ENCODE measurements at regions of chr7 and their contacts with region 1.

Region 1: GRCh38 chr7:129825496-129826267 is 127.1 kb downstream of the UBE2H start:
- DNase-seq: peak; percentile 97
- H3K4me3 ChIP-seq: peak overlapping the region; percentile 60 to 61
- H3K27ac ChIP-seq: peak overlapping the region; percentile 73 to 85
- H3K4me1 ChIP-seq: peaks cover 7 to 8% of the 10 kb centered on the region in 2 experiments; a peak in 3 of 4 replicates
- H3K27me3 ChIP-seq: no peaks in the 10 kb centered on the region
- CTCF ChIP-seq: peak; percentile 51
- EP300 ChIP-seq: no peak
- RAD21 ChIP-seq: peak; percentile 74

Region 2: DNA sequence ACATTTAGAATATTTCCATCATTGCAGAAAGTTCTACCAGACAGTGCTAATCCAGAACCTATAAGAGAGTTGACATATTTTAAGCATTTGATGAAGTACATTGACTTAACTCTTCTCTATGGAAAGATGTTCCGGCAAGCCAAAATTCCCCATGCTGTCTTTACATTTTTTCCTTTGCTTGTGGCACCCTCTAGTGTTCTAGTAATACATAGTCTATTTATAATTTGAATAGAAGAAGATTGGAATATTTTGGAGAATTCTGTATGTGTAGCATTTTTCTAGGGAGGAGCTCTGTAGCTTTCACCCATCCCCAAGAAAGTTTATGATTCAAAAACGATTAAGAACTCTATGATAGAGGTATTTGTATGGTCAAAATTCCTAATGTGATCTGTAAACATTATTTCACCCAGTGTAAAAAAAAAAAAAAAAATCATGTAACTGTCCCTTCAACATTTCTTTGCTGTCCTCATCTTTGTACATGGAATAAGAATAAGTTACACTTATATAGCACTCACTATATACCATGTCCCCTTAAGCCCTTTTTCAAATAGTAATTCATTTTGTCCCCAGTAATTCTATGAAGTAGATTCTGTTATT is 180.9 kb before region 1 on chr7:
- CTCF ChIA-PET with region 1: interaction called, 28 read pairs
- POLR2A ChIA-PET with region 1: no interaction called
- DNase-seq: peak; percentile 53
- H3K4me3 ChIP-seq: no peak overlapping the region
- H3K27ac ChIP-seq: no peak overlapping the region
- H3K4me1 ChIP-seq: peaks cover 2 to 9% of the 10 kb centered on the region in 2 experiments; a peak in 2 of 4 replicates
- H3K27me3 ChIP-seq: no peaks in the 10 kb centered on the region
- CTCF ChIP-seq: peak; percentile 84
- EP300 ChIP-seq: no peak
- RAD21 ChIP-seq: peak; percentile 89

Region 3: DNA sequence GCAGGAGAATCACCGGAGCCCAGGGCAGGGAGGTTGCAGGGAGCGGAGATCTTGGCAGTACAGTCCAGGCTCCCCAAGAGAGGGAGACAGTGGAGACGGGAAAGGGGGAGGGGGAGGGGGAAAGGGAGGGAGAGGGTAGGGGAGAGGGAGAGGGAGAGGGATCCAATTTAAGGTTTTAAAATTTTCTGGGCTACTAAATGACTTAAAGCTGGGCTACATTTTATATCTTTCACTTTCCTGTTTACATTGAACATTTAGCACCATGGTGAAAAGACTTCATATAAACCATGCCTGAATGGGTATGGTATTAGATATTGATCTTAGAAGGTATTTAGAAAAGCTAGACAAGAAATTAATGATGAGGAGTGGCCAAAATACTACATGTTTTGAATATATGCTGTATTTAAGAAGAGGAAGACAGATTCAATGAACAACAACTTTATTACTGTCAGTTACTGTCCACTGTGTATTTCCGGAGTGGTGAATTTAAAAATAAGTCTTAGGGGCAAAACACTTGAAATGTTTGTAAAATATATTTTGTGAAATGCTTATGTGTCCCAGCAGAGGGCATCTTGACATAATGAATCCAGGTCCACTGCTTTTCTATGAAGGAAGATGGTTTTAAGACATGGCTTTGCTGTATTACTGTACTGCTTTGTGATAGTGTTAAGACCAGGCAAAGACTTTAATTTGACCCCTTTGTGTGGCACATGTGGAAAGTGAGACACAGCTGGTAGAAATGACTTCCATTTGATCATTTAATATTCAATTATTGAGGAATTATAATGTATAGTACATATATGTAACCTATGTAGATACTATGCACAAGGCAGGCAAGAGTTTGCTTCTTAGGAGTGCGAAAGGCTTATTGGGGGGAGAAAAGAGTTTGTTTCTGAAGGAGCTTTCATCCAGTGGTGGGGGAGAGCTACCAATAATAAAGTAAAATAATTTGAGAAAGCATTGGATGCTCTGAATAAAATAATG is 161.4 kb before region 1 on chr7:
- CTCF ChIA-PET with region 1: interaction called, 187 read pairs
- POLR2A ChIA-PET with region 1: no interaction called
- DNase-seq: peak; percentile 79
- H3K4me3 ChIP-seq: no peak overlapping the region
- H3K27ac ChIP-seq: peak overlapping the region; percentile 9 to 85; a peak in 3 of 4 replicates
- H3K4me1 ChIP-seq: peaks cover 5 to 9% of the 10 kb centered on the region in 2 experiments
- H3K27me3 ChIP-seq: no peaks in the 10 kb centered on the region
- CTCF ChIP-seq: peak; percentile 93
- EP300 ChIP-seq: no peak
- RAD21 ChIP-seq: peak; percentile 100

Region 4: DNA sequence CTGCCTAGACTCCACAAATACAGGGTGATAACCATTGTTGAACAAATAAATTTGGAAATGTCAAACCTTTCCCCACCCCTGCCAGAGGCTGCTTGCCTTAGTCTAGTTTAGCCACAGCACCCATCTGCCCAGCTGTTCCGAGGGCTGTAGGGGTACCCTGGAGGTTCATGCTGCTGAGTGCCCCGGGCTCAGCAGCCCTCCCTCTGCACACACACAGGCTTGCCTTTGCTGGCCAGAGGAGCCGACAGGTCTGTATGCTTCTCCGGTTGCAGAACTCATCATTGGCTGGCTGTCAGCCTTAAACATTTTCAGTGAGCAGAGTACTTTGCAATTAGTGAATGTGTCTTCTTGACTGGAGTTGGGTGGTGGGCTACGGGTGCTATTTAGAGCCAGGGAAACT is 91.3 kb before region 1 on chr7:
- CTCF ChIA-PET with region 1: interaction called, 15 read pairs
- POLR2A ChIA-PET with region 1: no interaction called
- DNase-seq: no peak
- H3K4me3 ChIP-seq: no peak overlapping the region
- H3K27ac ChIP-seq: no peak overlapping the region
- H3K4me1 ChIP-seq: peaks cover 0 to 6% of the 10 kb centered on the region in 2 experiments; a peak in 3 of 4 replicates
- H3K27me3 ChIP-seq: no peaks in the 10 kb centered on the region
- CTCF ChIP-seq: no peak
- EP300 ChIP-seq: no peak
- RAD21 ChIP-seq: no peak

Region 5: DNA sequence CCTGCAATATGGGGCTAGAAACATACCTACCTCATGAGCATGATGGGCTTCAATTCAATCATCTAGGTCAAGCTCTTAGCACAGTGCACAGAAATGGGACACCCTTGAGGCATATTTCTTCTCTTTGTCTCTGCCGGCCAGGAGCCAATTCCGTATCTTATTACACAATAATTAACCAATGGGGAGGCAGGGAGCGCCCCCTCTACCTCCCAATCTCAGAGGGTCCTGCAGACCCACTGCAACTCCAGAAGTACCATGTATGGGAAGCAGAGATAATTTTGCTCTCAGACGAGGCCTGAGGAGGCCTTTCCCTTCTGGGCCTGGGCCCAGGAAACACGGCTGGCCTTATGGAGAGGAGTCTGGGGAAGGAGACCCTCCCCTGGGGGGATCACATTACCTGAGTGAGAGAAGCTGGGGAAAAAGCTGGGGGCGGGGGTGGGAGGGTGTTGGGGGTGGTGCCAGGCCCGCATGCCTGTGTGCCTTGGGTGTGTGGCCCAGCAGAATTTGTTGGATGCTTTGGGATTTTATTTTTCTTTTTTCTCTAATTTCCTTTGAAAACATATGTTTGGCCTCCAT is 28.4 kb before region 1 on chr7:
- CTCF ChIA-PET with region 1: interaction called, 57 read pairs
- POLR2A ChIA-PET with region 1: no interaction called
- DNase-seq: peak; percentile 44
- H3K4me3 ChIP-seq: no peak overlapping the region
- H3K27ac ChIP-seq: no peak overlapping the region
- H3K4me1 ChIP-seq: peaks cover 0 to 10% of the 10 kb centered on the region in 2 experiments; a peak in 1 of 4 replicates
- H3K27me3 ChIP-seq: no peaks in the 10 kb centered on the region
- CTCF ChIP-seq: no peak
- EP300 ChIP-seq: no peak
- RAD21 ChIP-seq: no peak

Region 6: GRCh38 chr7:129853661-129854300 is 28.1 kb after region 1 on chr7:
- CTCF ChIA-PET with region 1: interaction called, 32 read pairs
- POLR2A ChIA-PET with region 1: interaction called, 3 read pairs
- DNase-seq: no peak
- H3K4me3 ChIP-seq: peak overlapping the region; percentile 7 to 16; a peak in 3 of 4 replicates
- H3K27ac ChIP-seq: peak overlapping the region; percentile 98 to 99
- H3K4me1 ChIP-seq: peaks cover 59 to 63% of the 10 kb centered on the region in 2 experiments
- H3K27me3 ChIP-seq: no peaks in the 10 kb centered on the region
- CTCF ChIP-seq: no peak
- EP300 ChIP-seq: peak in 1 of 2 experiments; percentile 85; a peak in 2 of 4 replicates
- RAD21 ChIP-seq: no peak; the same call in 1 of the 2 replicates

Region 7: GRCh38 chr7:129870668-129871067 is 45.0 kb after region 1 on chr7:
- CTCF ChIA-PET with region 1: no interaction called
- POLR2A ChIA-PET with region 1: no interaction called
- DNase-seq: no peak
- H3K4me3 ChIP-seq: no peak overlapping the region
- H3K27ac ChIP-seq: no peak overlapping the region
- H3K4me1 ChIP-seq: peaks cover 5 to 8% of the 10 kb centered on the region in 2 experiments; a peak in 3 of 4 replicates
- H3K27me3 ChIP-seq: no peaks in the 10 kb centered on the region
- CTCF ChIP-seq: no peak
- EP300 ChIP-seq: no peak
- RAD21 ChIP-seq: no peak